Left ventricle myocardium superior (tissue), 1 donor: ENCODE measurements at regions of chr9 and their contacts with region 1.

Region 1: DNA sequence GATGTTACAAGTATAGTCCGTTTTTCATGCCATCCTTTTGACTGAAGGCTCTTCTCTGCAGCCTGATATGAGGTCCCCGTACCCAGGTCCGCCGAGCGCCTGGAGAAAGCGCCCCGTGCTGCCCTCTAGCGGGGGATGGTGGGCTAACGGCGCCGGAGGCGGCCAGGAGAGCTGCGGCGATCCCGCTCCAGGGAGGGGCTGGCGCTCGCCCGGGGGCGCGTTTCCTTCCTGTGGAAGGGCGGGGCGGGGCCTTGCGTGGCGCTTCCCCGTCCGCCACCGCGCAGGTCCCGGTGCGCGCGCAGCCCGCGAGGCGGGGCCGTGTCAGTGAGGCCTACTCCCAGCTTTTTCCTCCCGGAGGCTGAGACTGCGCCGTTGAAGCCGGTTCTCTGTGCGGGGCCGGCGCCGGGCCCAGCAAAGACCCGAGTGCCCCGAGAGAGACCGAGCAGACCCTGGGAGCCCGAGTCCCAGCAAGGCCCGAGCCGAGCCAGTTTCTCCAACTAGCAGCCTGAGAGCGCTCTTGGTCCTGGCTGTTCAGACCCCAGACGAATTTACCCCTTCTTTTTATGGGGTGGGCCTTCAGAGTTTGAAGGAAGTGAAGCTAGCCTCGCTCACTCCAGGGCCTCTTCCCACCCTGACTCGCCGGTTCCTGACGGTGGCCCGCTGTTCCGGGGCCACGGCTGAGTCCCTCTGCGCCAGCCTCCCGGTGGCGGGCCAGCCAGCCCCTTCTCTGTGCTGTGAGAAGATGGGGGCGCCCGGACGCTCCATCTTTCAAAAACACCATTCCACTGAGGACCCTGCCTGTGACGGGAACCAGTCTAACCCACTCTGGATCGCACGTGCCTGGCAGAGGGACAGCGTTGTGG is 9.7 kb upstream of the PHF2 start:
- DNase-seq: peak; percentile 100
- ATAC-seq: peak; percentile 99

Region 2: GRCh38 chr9:93444301-93444700 is 122.3 kb before region 1 on chr9:
- intact Hi-C with region 1: loop called (anchors 10 kb)
- DNase-seq: no peak
- ATAC-seq: no peak